IMR-90 (cell line): ENCODE measurements at regions of chr1 and their contacts with region 1.

Region 1: DNA sequence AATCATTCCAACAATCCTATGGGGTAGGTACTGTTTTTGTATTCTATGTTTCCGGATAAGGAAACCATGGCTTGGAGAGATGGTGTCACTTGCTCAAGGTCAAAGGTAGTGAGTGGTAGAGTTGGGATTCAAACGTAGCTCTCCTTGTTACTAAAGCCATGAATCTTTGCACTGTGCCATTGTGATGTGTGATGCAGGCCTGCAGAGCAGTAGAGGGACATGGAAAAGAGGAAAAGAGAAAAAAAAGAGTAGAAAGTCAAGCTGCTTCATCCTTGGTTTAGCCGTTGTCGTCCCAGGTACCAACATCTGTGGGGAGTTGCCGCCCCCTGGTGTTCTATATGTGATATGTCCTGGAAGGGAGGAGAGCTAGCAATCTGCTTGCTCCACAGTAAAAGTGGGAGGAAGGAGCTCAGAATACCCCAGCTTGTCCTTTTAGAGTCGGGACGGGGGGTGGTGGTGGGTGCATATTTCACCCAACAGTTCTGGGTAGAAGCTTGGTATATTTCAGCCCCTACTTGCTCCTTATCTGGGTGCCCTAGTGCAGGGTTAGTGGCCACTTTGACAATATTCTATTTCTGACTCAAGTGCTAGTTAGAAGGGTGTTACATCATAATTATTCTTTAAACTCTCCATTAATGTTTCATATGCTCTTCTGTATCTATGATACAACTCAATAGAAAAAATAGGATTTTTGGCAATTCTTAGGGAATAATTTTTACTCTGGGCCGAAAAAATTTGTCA is 98.4 kb downstream of the EBNA1BP2 start:
- DNase-seq: peak; percentile 71
- ATAC-seq: peak; percentile 84
- H3K4me3 ChIP-seq: no peak overlapping the region
- H3K27ac ChIP-seq: no peak overlapping the region
- H3K4me1 ChIP-seq: peaks cover 9% of the 10 kb centered on the region
- H3K27me3 ChIP-seq: peaks cover 4% of the 10 kb centered on the region
- CTCF ChIP-seq: peak; percentile 94
- POLR2A ChIP-seq: peak; percentile 54; the same call in 1 of the 2 replicates
- RAD21 ChIP-seq: peak; percentile 98

Region 2: DNA sequence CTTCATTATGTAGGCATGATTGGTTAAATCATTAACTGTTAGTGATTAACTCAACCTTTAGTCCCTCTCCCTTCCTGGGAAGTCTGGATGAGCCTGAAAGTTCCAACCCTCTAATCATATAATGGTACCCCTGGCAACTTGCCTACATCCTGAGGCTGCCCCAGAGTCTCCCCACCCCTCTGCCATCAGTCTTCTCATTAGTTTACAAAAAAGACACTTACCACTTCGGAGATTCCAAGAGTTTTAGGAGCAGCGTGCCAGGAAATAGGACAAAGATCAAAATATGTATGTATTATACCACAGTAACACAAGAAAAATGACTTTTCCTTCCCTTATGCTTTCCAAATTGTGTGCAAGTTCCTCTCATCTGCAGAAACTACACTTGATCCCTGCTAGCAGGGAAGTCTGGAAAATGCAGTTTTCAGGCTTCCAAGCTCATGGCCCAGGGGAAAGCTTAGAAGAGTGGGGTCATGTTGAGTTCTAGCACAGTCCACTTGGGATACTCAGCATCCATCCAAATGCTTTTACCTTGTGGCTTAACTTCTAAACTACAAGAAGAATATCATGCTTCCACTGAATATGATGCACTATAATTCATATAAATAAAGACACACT is 480.1 kb before region 1 on chr1:
- CTCF ChIA-PET with region 1: no interaction called
- POLR2A ChIA-PET with region 1: no interaction called
- dilution Hi-C with region 1: no loop called
- in situ Hi-C with region 1: loop called (anchors 25 kb)
- intact Hi-C with region 1: no loop called
- DNase-seq: no peak
- ATAC-seq: no peak
- H3K4me3 ChIP-seq: no peak overlapping the region
- H3K27ac ChIP-seq: no peak overlapping the region
- H3K4me1 ChIP-seq: no peaks in the 10 kb centered on the region
- H3K27me3 ChIP-seq: no peaks in the 10 kb centered on the region; the same call in 1 of the 2 replicates
- CTCF ChIP-seq: no peak
- POLR2A ChIP-seq: no peak
- RAD21 ChIP-seq: no peak

Region 3: GRCh38 chr1:42777852-42778251 is 295.8 kb before region 1 on chr1:
- CTCF ChIA-PET with region 1: interaction called, 13 read pairs
- POLR2A ChIA-PET with region 1: no interaction called
- dilution Hi-C with region 1: no loop called
- in situ Hi-C with region 1: loop called (anchors 5 kb)
- intact Hi-C with region 1: loop called (anchors 1 kb)
- DNase-seq: peak; percentile 46
- ATAC-seq: peak; percentile 95
- H3K4me3 ChIP-seq: no peak overlapping the region
- H3K27ac ChIP-seq: no peak overlapping the region
- H3K4me1 ChIP-seq: no peaks in the 10 kb centered on the region
- H3K27me3 ChIP-seq: no peaks in the 10 kb centered on the region
- CTCF ChIP-seq: peak; percentile 71
- POLR2A ChIP-seq: no peak
- RAD21 ChIP-seq: peak; percentile 86

Region 4: DNA sequence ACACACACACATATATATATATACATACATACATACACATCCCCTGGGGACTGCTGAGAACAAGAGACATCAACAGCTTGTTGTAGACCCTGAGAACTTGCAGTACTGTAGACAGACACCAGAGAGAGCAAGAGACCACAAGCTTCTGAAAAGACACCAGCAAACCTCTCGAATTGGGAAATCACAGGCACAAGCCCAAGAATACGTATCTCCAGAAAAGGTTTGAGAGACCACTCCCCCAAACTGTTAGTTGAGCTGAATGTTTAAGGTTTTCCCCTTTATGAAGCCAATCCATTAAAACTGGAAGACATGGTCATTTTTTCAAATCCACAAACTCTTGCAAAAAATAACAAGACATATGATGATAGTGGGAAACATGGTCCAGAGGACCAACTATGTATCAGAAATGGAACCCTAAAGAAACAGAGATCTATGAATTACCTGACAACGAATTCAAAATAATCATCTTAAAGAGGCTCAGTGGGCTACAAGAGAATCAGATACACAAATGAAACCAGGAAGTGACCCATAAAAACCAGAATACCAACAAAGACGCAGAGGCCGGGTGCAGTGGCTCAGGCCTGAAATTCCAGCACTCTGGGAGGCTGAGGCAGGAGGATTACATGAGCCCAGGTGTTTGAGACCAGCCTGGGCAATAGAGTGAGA is 160.1 kb before region 1 on chr1:
- CTCF ChIA-PET with region 1: interaction called, 132 read pairs
- POLR2A ChIA-PET with region 1: interaction called, 5 read pairs
- dilution Hi-C with region 1: no loop called
- in situ Hi-C with region 1: no loop called
- intact Hi-C with region 1: loop called (anchors 1 kb)
- DNase-seq: peak; percentile 82
- ATAC-seq: peak; percentile 98
- H3K4me3 ChIP-seq: no peak overlapping the region
- H3K27ac ChIP-seq: no peak overlapping the region
- H3K4me1 ChIP-seq: no peaks in the 10 kb centered on the region
- H3K27me3 ChIP-seq: peaks cover 3% of the 10 kb centered on the region
- CTCF ChIP-seq: peak; percentile 77
- POLR2A ChIP-seq: no peak
- RAD21 ChIP-seq: peak; percentile 92

Region 5: GRCh38 chr1:42924082-42924850 is 149.4 kb before region 1 on chr1:
- CTCF ChIA-PET with region 1: interaction called, 29 read pairs
- POLR2A ChIA-PET with region 1: interaction called, 4 read pairs
- dilution Hi-C with region 1: no loop called
- in situ Hi-C with region 1: loop called (anchors 5 kb)
- intact Hi-C with region 1: loop called (anchors 2 kb)
- DNase-seq: peak; percentile 75
- ATAC-seq: peak; percentile 93
- H3K4me3 ChIP-seq: peak overlapping the region; percentile 67
- H3K27ac ChIP-seq: peak overlapping the region; percentile 72
- H3K4me1 ChIP-seq: peaks cover 3% of the 10 kb centered on the region
- H3K27me3 ChIP-seq: no peaks in the 10 kb centered on the region
- CTCF ChIP-seq: peak; percentile 27; the same call in 1 of the 2 replicates
- POLR2A ChIP-seq: peak; percentile 60
- RAD21 ChIP-seq: no peak

Region 6: GRCh38 chr1:42931108-42931539 is 142.5 kb before region 1 on chr1:
- CTCF ChIA-PET with region 1: interaction called, 9 read pairs
- POLR2A ChIA-PET with region 1: no interaction called
- dilution Hi-C with region 1: no loop called
- in situ Hi-C with region 1: no loop called
- intact Hi-C with region 1: loop called (anchors 1 kb)
- DNase-seq: peak; percentile 39
- ATAC-seq: peak; percentile 69
- H3K4me3 ChIP-seq: no peak overlapping the region
- H3K27ac ChIP-seq: no peak overlapping the region
- H3K4me1 ChIP-seq: peaks cover 18% of the 10 kb centered on the region
- H3K27me3 ChIP-seq: no peaks in the 10 kb centered on the region
- CTCF ChIP-seq: peak; percentile 50
- POLR2A ChIP-seq: no peak
- RAD21 ChIP-seq: peak; percentile 65

Region 7: DNA sequence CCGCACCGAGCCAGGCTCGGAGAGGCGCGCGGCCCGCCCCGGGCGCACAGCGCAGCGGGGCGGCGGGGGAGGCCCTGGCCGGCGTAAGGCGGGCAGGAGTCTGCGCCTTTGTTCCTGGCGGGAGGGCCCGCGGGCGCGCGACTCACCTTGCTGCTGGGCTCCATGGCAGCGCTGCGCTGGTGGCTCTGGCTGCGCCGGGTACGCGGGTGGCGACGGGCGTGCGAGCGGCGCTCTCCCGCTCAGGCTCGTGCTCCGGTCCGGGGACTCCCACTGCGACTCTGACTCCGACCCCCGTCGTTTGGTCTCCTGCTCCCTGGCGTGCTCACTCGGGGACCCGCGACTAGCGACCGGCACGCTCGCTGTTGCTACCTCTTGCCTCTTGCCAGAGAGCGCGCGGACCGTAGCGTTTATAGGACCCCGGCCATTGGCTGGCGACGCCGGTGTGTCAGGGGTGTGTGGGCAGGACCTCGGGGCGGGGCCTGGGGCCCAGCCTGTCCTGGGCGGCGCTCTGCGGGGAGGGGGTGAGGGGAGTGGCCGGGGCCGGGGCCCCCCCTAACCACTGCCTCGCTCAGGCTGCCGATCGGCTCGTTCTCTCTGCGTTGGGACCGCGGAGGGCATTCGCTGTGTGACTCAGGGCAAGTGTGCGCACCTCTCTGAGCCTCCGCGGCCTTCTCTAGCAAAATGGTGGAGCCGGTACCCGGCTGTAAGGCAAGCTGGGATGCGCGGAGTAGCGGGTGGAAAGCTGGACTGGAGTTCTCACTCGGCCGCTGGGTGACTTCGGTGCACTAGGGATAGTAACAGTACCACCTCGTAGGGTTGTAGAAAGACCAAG is 115.0 kb before region 1 on chr1 and contains the start of gene SLC2A1:
- CTCF ChIA-PET with region 1: interaction called, 5 read pairs
- POLR2A ChIA-PET with region 1: interaction called, 4 read pairs
- dilution Hi-C with region 1: no loop called
- in situ Hi-C with region 1: no loop called
- intact Hi-C with region 1: loop called (anchors 1 kb)
- DNase-seq: peak; percentile 94
- ATAC-seq: peak; percentile 87
- H3K4me3 ChIP-seq: peak within 1 kb of the TSS; percentile 91
- H3K27ac ChIP-seq: peak within 1 kb of the TSS; percentile 89
- H3K4me1 ChIP-seq: peaks cover 41% of the 10 kb centered on the region
- H3K27me3 ChIP-seq: no peaks in the 10 kb centered on the region
- CTCF ChIP-seq: no peak
- POLR2A ChIP-seq: peak; percentile 99
- RAD21 ChIP-seq: no peak
- total RNA-seq, gene SLC2A1: 203 and 395 TPM in 2 replicates